ENCODE measurements at regions of chr3 and their contacts with region 1.

Region 1: DNA sequence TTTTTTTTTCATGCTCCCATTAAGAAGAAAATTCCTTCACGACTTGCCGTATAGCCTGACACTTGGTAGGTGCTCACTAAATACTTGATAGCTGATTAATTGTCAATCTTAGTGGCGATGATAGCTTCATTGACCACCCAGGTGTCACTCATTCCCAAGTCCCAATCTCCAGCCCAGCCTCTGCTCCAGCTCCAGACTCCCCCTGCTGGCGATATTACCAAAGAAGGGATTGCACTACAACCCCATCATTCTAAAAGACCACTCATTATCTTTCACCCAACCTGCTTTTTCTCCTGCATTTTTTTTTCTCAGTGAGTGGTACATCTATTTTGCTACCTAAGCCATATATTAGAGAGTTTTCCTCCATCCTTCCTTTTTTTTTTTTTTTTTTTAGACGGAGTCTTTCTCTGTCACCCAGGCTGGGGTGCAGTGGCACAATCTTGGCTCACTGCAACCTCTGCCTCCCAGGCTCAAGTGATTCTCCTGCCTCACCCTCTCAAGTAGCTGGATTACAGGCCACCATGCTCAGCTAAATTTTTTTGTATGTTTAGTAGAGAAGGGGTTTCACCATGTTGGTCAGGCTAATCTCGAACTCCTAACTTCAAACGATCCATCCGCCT is 19.5 kb upstream of the COMMD2 start:
- DNase-seq: no peak
- H3K4me3 Mint-ChIP-seq: no peak overlapping the region
- H3K27ac Mint-ChIP-seq: no peak overlapping the region
- H3K4me1 Mint-ChIP-seq: no peaks in the 10 kb centered on the region
- H3K27me3 Mint-ChIP-seq: peaks cover 17% of the 10 kb centered on the region

Region 2: DNA sequence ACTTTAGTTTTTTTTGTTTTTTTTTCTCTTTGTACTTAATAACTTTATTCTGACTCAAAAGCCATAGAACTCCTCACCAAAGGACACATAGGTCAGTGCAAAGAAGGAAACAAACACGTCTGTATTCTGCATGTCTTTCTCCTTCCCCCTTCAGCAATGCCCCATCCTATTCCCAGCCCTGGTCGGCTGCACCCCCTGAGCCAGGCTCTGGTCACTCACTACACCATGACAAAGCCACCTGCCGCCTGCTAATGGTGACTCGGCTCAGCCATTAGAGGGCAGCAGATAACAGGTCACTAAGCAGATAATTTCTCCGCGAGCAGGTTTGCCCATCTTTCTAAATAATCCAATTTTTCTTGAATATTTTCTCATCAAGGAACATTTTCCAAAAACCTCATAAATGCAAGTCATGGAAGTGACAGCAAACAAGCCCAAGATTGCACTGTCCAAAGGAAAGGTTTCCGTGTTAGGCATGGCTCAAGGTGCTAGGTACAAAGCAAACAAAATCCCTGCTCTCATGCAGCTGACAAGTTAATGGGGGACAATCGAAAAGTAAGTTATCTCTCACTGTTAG is 259.5 kb before region 1 on chr3:
- intact Hi-C with region 1: loop called (anchors 2 kb)
- DNase-seq: no peak
- H3K4me3 Mint-ChIP-seq: no peak overlapping the region
- H3K27ac Mint-ChIP-seq: no peak overlapping the region
- H3K4me1 Mint-ChIP-seq: peaks cover 12% of the 10 kb centered on the region
- H3K27me3 Mint-ChIP-seq: peaks cover 24% of the 10 kb centered on the region

Region 3: DNA sequence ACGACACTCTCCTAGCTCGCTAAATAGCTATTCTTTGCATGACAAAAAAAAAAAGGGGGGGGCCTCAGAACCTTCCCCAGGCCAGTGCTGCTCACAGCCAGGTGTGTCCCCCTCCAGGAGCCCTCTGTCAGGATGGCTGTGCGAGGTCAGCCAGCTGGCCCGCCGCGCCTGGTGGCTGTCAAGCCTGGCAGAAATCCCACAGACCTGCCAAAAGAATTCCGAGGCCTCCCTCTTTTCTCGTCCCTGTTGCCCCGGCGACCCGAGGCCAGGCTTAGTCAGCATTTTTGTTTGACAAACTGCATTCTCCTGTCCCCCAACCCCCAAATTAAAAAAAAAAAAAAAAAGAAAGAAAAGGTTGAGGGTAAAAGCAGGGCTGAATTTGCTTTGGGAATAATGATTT is 235.3 kb before region 1 on chr3:
- intact Hi-C with region 1: loop called (anchors 2 kb)
- DNase-seq: no peak
- H3K4me3 Mint-ChIP-seq: no peak overlapping the region
- H3K27ac Mint-ChIP-seq: no peak overlapping the region
- H3K4me1 Mint-ChIP-seq: peaks cover 3% of the 10 kb centered on the region
- H3K27me3 Mint-ChIP-seq: peaks cover 12% of the 10 kb centered on the region

Region 4: DNA sequence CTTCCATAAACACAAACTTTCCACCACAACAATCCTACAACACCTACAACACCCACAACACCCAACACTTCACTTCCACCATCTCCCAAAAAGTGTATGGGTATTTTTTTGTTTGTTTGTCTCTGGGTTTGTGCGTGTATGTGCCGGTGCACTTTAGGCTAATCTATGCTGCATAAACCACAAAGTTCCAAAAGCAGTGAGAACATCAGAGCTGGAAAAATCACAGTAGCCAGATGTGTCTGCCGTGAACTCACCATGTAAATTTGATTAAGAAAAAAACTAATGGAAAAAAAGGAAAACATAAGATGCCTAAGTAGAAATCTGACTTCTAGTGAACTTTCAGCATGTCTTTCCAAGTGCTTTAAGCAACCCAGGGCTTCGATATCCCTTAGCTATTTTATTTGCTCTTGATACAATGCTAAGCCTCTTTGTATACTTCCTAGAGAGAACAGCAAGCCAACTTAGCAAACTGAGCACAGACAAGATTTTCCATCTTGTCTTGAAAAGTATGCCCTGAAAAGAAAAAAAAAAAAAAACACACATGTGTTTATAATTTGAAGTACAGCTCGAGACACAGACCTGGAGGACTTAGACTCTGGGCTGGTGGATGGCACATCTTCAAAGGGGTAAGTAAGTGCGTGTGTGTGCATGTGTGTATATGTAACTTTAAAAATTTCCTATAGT is 205.3 kb before region 1 on chr3:
- intact Hi-C with region 1: loop called (anchors 5 kb)
- DNase-seq: no peak
- H3K4me3 Mint-ChIP-seq: no peak overlapping the region
- H3K27ac Mint-ChIP-seq: no peak overlapping the region
- H3K4me1 Mint-ChIP-seq: peaks cover 5% of the 10 kb centered on the region
- H3K27me3 Mint-ChIP-seq: peaks cover 13% of the 10 kb centered on the region

Region 5: DNA sequence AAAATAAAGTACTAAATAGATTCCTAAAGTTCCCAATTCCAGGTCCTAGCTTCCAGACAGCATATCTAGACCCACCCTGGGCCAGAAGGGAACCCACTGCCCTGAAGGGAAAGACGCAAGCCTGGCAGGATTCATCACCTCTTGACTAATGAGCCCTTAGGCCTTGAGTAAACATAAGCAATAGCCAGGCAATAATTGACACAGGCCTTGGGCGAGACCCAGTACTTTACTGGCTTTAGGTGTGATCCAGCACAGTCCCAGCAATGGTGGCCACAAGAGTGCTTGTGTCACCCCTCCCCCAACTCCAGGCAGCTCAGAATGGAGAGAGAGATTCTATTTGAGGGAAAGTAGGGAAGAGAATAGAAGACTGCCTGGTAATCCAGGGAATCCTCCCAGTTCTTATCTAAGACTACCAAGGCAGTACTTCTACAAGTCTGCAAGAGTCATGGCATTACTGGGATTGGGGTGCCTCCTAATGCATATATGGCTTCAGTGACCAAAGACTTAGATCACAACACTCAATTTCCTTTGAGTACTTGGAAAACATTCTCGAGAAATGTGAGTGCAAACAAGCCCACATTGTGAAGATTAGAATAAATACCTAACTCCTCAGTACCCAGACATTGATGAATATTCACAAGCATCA is 83.5 kb before region 1 on chr3:
- intact Hi-C with region 1: no loop called
- DNase-seq: no peak
- H3K4me3 Mint-ChIP-seq: no peak overlapping the region
- H3K27ac Mint-ChIP-seq: no peak overlapping the region
- H3K4me1 Mint-ChIP-seq: no peaks in the 10 kb centered on the region
- H3K27me3 Mint-ChIP-seq: peaks cover 9% of the 10 kb centered on the region

Region 6: DNA sequence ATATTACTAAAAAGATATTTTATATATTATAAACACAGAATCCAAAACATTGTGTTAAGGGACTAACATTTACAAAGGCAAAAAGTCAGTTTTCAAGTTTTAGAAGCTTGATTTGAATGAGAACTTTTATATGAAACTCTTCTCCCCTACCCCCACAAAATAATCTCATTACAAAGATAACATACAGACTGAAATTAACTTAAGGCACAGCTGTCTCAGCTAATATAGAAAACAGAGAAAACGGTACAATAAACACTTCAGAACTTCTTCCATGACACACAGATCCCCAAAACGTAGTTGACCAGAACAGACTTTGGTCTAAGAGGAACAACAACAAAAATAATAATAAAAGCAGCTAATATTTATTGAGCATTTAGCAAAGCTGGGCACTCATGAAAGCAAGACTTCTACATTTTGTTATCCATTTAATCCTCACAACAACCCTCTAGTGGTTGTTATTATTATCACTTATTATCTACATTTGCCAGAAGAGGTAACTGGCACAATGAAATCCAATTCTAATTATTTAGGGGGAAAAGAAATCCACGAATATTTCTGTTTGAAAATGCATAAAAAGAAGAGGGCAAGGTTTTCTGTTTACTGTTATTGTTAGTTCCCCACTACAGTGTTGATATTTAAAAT is 130.9 kb after region 1 on chr3:
- intact Hi-C with region 1: no loop called
- DNase-seq: no peak
- H3K4me3 Mint-ChIP-seq: no peak overlapping the region
- H3K27ac Mint-ChIP-seq: no peak overlapping the region
- H3K4me1 Mint-ChIP-seq: no peaks in the 10 kb centered on the region
- H3K27me3 Mint-ChIP-seq: no peaks in the 10 kb centered on the region

Region 7: DNA sequence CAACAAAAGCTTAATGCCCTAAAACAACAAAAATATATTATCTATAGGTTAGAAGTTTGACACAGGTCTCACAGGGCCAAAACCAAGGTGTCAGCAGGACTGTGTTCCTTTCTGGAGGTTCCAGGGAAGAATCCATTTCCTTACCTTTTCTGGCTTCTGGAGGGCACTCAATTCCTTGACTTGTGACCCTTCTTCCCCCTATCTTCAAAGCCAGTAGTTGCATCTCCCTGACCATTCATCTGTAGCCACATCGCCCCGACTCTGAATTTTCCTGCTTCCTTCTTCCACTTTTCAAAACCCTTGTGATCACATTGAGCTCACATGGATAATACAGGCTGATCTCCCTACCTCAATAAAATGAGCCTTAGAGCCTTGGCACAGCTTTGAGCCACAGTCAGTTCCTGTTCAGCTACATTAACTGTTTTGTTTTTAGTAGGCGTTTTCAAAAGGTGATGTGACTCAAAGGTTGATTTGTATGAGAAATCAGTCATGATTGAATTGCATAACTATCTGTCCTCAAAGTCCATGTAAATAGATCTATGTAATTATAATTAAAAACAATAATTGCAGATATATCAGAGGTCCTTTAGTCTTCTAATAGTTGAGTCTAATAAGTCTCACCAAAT is 186.5 kb after region 1 on chr3:
- intact Hi-C with region 1: no loop called
- DNase-seq: no peak
- H3K4me3 Mint-ChIP-seq: no peak overlapping the region
- H3K27ac Mint-ChIP-seq: no peak overlapping the region
- H3K4me1 Mint-ChIP-seq: peaks cover 11% of the 10 kb centered on the region
- H3K27me3 Mint-ChIP-seq: no peaks in the 10 kb centered on the region